ENCODE measurements at regions of chr19 and their contacts with region 1.

Region 1: GRCh38 chr19:36837906-36838783 is at the start of gene ZNF790:
- DNase-seq: peak; percentile 94
- ATAC-seq: peak; percentile 98
- total RNA-seq, gene ZNF790: 8.3 TPM

Region 2: GRCh38 chr19:36796076-36796992 is 41.8 kb before region 1 on chr19:
- intact Hi-C with region 1: no loop called
- DNase-seq: no peak
- ATAC-seq: no peak

Region 3: GRCh38 chr19:36850559-36851442 is 12.7 kb after region 1 on chr19 and contains the start of gene ZNF345:
- intact Hi-C with region 1: loop called (anchors 1 kb)
- DNase-seq: peak; percentile 94
- ATAC-seq: peak; percentile 97
- total RNA-seq, gene ZNF345: 3.1 TPM